Endothelial cell of umbilical vein (primary cell): ENCODE measurements at regions of chr12 and their contacts with region 1.

Region 1: DNA sequence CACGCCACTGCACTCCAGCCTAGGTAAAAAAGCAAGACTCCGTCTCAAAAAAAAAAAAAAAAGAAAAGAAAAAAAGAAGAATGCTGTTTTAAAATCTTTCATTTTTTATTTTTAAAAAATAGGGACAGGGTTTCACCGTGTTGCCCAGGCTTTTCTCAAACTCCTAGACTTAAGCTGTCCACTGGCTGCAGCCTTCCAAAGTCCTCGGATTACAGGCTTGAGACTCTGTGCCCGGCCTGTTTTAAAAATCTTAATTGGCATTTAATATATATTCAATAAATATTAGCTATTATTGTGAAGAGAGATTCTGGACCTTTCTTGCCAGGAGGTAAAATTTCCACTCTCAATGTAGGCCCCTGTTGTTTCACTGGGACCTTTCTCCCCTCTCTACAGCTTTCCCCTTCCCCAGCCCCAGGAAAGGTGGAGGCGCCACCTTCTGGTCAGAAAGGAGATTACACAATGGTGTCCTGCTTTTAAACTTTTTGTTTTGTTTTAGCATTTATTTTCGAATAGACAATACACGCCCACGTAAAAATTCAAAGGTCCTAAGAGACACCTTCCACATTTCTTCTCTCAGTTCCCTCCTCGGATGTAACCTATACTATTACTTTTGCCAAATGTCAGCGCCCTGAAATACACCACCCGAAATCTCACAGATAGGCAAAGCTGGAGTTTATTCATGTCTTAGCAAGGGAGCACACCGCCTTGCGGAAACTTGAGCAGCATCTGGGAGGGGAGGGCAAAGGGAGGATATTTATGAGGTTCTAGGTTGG is 23.8 kb upstream of the PHC1 start:
- DNase-seq: peak; percentile 77
- H3K4me3 ChIP-seq: peak overlapping the region; percentile 42 to 93 (median 63)
- H3K27ac ChIP-seq: no peak overlapping the region
- H3K4me1 ChIP-seq: no peaks in the 10 kb centered on the region
- H3K27me3 ChIP-seq: peaks cover 2% of the 10 kb centered on the region in 2 experiments
- CTCF ChIP-seq: peak; percentile 76 to 83
- POLR2A ChIP-seq: no peak

Region 2: GRCh38 chr12:8681041-8681902 is 209.2 kb before region 1 on chr12:
- CTCF ChIA-PET with region 1: interaction called, 67 read pairs
- POLR2A ChIA-PET with region 1: no interaction called
- dilution Hi-C with region 1: no loop called
- intact Hi-C with region 1: loop called (anchors 1 kb)
- DNase-seq: peak; percentile 91
- H3K4me3 ChIP-seq: peak overlapping the region in 2 of 3 experiments; percentile 3 to 53
- H3K27ac ChIP-seq: peak overlapping the region; percentile 63
- H3K4me1 ChIP-seq: peaks cover 27% of the 10 kb centered on the region
- H3K27me3 ChIP-seq: no peaks in the 10 kb centered on the region
- CTCF ChIP-seq: no peak
- POLR2A ChIP-seq: no peak

Region 3: GRCh38 chr12:8823565-8824300 is 66.8 kb before region 1 on chr12:
- CTCF ChIA-PET with region 1: interaction called, 20 read pairs
- POLR2A ChIA-PET with region 1: no interaction called
- dilution Hi-C with region 1: no loop called
- intact Hi-C with region 1: no loop called
- DNase-seq: peak; percentile 53
- H3K4me3 ChIP-seq: no peak overlapping the region
- H3K27ac ChIP-seq: no peak overlapping the region
- H3K4me1 ChIP-seq: no peaks in the 10 kb centered on the region
- H3K27me3 ChIP-seq: peaks cover 1 to 3% of the 10 kb centered on the region in 2 experiments
- CTCF ChIP-seq: peak; percentile 62 to 65
- POLR2A ChIP-seq: no peak

Region 4: DNA sequence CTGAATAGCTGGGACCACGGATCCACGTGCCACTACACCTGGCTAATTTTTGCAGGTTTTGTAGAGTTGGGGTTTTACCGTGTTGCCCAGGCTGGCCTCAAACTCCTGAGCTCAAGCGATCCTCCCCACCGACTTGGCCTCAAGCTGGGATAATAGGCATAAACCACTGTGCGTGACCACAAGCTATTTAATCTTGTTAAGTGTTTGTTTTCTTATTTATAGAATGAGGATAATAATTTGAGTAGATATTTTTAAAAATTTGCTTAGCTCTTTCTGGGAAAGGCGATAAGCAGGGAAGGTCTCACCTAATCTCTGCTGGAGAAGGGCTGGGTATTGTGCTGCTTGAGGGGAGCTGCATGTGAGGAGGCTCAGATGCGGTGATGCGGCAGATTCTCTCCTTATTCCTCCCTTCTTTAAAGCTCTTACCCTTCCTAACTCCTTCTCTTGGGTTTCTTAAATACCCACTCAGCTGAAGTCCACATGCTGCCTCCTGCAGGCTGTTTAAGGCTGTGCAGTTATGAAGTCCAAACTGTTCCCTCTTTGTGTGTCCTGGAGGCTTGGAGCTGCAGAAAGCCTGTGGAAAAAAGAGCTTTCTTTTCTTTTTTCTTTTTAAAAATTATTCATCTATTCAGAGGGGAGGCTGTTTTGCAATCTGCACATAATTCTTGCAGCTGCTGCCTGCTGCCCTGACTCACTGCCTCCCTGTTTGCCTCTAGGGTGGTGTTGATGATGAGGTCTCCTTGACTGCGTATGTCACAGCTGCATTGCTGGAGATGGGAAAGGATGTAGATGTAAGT is 30.1 kb before region 1 on chr12:
- CTCF ChIA-PET with region 1: interaction called, 37 read pairs
- POLR2A ChIA-PET with region 1: no interaction called
- dilution Hi-C with region 1: no loop called
- intact Hi-C with region 1: no loop called
- DNase-seq: peak; percentile 59
- H3K4me3 ChIP-seq: no peak overlapping the region
- H3K27ac ChIP-seq: no peak overlapping the region
- H3K4me1 ChIP-seq: no peaks in the 10 kb centered on the region
- H3K27me3 ChIP-seq: no peaks in the 10 kb centered on the region
- CTCF ChIP-seq: peak; percentile 66 to 70
- POLR2A ChIP-seq: no peak

Region 5: DNA sequence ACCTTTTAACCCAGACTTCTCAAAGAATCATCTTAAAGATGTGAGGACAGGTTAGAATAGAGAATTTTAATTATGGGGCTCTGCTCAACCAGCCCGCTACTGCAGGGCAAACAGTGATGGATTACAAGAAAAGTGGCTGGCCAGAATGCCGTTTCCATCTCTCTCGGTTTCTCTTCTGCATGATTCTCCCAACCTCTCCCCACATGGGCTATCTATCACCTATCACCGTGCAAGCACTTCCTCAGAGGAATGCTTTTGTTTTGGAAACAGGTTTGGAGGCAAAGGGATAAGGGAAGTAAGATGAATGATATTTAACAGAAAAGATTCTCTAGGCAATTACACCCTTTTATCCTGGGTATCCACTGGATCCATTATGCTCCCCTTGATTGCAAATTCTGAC is 13.6 kb before region 1 on chr12:
- CTCF ChIA-PET with region 1: interaction called, 27 read pairs
- POLR2A ChIA-PET with region 1: no interaction called
- dilution Hi-C with region 1: no loop called
- intact Hi-C with region 1: no loop called
- DNase-seq: no peak
- H3K4me3 ChIP-seq: no peak overlapping the region
- H3K27ac ChIP-seq: no peak overlapping the region
- H3K4me1 ChIP-seq: no peaks in the 10 kb centered on the region
- H3K27me3 ChIP-seq: peaks cover 0 to 2% of the 10 kb centered on the region in 2 experiments
- CTCF ChIP-seq: no peak
- POLR2A ChIP-seq: no peak

Region 6: GRCh38 chr12:8914716-8915526 is 24.4 kb after region 1 on chr12:
- CTCF ChIA-PET with region 1: interaction called, 24 read pairs
- POLR2A ChIA-PET with region 1: no interaction called
- dilution Hi-C with region 1: no loop called
- intact Hi-C with region 1: no loop called
- DNase-seq: peak; percentile 66
- H3K4me3 ChIP-seq: peak overlapping the region; percentile 87 to 92 (median 87)
- H3K27ac ChIP-seq: peak overlapping the region; percentile 34
- H3K4me1 ChIP-seq: peaks cover 18% of the 10 kb centered on the region
- H3K27me3 ChIP-seq: no peaks in the 10 kb centered on the region
- CTCF ChIP-seq: no peak
- POLR2A ChIP-seq: no peak

Region 7: DNA sequence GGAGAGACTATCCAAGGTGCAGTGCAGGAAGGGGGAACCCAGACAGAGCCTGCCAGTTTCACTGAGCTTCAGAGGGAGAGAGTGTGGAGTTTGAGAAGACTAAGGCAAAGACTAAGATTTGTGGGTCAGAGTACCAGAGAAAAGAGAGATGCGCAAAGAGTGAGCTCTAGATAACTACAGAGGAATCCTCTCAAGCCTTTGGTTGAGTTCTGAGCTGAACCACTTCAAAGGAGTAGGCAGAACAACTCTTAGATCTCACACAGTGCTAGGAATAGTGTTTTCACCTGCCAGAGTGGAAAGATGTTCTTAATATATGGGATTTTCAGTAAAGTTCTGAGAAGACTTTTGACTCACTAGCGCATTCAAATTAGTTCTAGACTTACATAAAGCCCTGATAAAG is 69.7 kb after region 1 on chr12:
- CTCF ChIA-PET with region 1: no interaction called
- POLR2A ChIA-PET with region 1: no interaction called
- dilution Hi-C with region 1: no loop called
- intact Hi-C with region 1: no loop called
- DNase-seq: no peak
- H3K4me3 ChIP-seq: no peak overlapping the region
- H3K27ac ChIP-seq: no peak overlapping the region
- H3K4me1 ChIP-seq: no peaks in the 10 kb centered on the region
- H3K27me3 ChIP-seq: no peaks in the 10 kb centered on the region
- CTCF ChIP-seq: no peak
- POLR2A ChIP-seq: no peak

Region 8: GRCh38 chr12:9039397-9039977 is 149.0 kb after region 1 on chr12:
- CTCF ChIA-PET with region 1: interaction called, 18 read pairs
- POLR2A ChIA-PET with region 1: no interaction called
- dilution Hi-C with region 1: no loop called
- intact Hi-C with region 1: loop called (anchors 1 kb)
- DNase-seq: peak; percentile 63
- H3K4me3 ChIP-seq: no peak overlapping the region
- H3K27ac ChIP-seq: no peak overlapping the region
- H3K4me1 ChIP-seq: no peaks in the 10 kb centered on the region
- H3K27me3 ChIP-seq: peaks cover 7 to 8% of the 10 kb centered on the region in 2 experiments
- CTCF ChIP-seq: peak; percentile 47 to 54
- POLR2A ChIP-seq: no peak